Activated naive CD8-positive, alpha-beta T cell treated with anti-CD3 and anti-CD28 coated beads, Interleukin-2, amount 10 ng/mL, durations not matched to agents 7 days and 5 days (primary cell): ENCODE measurements at regions of chr21 and their contacts with region 1.

Region 1: GRCh38 chr21:41879190-41879998 is at the start of gene PRDM15:
- DNase-seq: peak; percentile 90
- ATAC-seq: peak; percentile 78
- H3K4me3 Mint-ChIP-seq: peak within 1 kb of the TSS; percentile 91
- H3K27ac Mint-ChIP-seq: peak within 1 kb of the TSS; percentile 95
- H3K4me1 Mint-ChIP-seq: peaks cover 14% of the 10 kb centered on the region
- H3K27me3 Mint-ChIP-seq: no peaks in the 10 kb centered on the region
- total RNA-seq, gene PRDM15: 14.2 to 14.8 TPM

Region 2: DNA sequence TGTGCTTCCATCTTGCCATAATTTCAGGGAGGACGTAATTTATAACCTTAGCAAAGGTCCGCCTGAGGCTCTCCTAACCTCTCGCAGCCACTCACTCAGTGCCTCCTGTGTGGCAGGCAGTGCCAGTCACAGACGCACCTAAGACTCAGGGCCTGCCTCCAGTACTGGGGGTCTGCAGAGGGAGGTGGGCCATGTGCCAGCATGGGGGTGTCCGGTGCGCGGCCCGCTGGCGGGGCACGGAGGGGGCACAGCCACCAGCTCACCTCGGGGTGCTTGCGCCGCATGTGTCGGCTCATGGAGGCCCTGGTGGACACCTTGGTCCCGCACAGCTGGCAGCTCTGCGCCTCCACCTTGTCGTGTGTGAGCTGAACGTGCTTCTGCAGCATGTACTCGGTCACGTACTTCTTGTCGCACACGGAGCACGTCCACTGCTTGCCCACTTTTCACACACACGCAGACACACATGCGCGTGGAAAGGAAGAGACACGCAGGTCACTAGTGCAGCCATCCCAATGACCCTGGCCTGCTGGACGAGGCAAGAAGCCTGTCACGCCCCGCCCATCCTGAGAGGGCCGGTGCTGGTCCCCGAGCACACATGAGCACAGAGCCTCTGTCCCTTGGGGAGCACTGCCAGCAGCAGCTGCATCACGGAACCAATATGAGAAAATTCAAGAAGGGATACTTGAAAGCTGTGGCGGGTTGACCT is 69.3 kb before region 1 on chr21:
- POLR2A ChIA-PET with region 1: no interaction called
- DNase-seq: no peak
- ATAC-seq: no peak
- H3K4me3 Mint-ChIP-seq: no peak overlapping the region
- H3K27ac Mint-ChIP-seq: no peak overlapping the region
- H3K4me1 Mint-ChIP-seq: no peaks in the 10 kb centered on the region
- H3K27me3 Mint-ChIP-seq: no peaks in the 10 kb centered on the region

Region 3: GRCh38 chr21:41895643-41896493 is 16.5 kb after region 1 on chr21:
- POLR2A ChIA-PET with region 1: interaction called, 26 read pairs
- DNase-seq: peak; percentile 66
- ATAC-seq: peak; percentile 85
- H3K4me3 Mint-ChIP-seq: peak overlapping the region; percentile 35
- H3K27ac Mint-ChIP-seq: peak overlapping the region; percentile 77
- H3K4me1 Mint-ChIP-seq: peaks cover 42% of the 10 kb centered on the region
- H3K27me3 Mint-ChIP-seq: no peaks in the 10 kb centered on the region